ENCODE measurements at regions of chr9 and their contacts with region 1.

Region 1: GRCh38 chr9:37920471-37921167 is 16.7 kb upstream of the SLC25A51 start:
- DNase-seq: no peak
- ATAC-seq: no peak

Region 2: DNA sequence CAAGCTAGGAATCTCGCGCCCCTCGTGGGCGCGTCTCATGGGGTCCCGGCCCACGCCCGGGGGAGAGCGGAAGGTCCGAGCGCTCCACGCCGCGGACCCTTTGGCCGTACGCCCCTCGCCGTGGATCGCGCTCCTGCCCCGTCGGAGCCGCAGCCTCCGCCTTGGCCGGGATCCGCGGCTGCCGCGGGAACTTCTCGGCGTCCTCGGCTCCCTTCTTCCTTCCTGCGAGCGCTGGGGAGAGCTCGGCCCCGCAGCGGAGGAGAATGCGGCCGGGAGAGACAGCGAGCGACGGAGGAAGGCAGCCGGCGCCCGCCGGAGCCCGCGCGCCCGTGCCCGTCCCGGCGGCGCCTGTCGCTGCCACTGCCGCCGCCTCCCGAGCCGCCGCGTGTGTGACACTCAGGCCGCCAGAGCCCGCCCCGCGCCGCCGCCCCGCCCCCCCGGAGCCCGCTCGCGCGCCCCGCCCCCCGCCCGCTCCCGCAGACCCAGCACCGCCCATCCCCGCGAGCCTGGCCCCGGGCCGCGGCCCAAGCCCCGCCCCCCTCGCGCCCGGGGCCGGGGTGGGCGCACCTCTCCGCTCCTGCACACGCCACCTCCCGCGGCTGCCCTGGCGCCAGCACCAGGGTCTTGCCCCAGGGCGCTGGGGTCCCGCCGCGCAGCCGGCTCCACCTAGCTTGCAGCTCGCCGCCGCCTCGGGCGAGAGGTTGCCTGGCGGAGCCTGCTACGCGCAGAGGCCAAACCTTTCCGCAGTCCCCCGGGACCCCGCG is 148.4 kb after region 1 on chr9 and contains the start of gene SHB:
- intact Hi-C with region 1: loop called (anchors 10 kb)
- DNase-seq: peak; percentile 92
- ATAC-seq: peak; percentile 85
- total RNA-seq, gene SHB: 15.9 TPM